ENCODE measurements at regions of chr18 and their contacts with region 1.

Region 1: DNA sequence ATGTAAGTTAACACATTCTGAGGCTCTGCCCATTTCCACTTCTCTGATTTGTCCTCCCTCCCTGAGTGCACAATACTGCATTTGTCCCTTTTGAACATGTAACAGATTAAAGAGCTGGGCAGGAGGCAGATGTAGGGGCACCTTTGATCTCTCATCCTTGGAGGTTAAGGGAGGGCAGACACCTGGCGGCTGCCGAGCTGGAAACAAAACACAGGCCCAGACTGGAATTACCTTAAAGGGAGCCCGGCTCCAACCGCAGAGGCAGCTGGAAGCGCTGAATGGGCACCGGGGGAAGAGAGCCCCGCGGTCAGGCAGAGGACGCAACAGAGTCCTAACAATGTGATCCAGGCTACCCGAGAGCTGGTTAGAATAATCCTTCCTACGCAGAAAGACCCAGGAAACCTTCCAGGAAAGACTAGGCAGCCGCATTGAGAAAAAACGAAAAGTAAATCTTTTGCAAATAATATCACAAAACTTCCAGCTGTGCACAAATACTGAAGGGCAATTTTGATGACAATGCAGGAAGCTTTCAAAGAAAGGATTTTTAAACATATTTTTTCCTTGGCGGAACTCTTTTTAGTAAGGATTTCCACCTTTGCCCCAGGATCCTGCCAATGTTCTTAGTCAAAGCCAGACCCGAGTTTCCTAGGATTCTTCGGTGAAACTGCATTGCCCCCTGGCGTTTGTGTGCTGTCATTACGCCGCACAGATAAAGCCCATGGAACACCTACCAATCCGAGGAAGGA is 216.0 kb downstream of the TGIF1 start:
- DNase-seq: peak; percentile 60 to 95 (median 86)

Region 2: DNA sequence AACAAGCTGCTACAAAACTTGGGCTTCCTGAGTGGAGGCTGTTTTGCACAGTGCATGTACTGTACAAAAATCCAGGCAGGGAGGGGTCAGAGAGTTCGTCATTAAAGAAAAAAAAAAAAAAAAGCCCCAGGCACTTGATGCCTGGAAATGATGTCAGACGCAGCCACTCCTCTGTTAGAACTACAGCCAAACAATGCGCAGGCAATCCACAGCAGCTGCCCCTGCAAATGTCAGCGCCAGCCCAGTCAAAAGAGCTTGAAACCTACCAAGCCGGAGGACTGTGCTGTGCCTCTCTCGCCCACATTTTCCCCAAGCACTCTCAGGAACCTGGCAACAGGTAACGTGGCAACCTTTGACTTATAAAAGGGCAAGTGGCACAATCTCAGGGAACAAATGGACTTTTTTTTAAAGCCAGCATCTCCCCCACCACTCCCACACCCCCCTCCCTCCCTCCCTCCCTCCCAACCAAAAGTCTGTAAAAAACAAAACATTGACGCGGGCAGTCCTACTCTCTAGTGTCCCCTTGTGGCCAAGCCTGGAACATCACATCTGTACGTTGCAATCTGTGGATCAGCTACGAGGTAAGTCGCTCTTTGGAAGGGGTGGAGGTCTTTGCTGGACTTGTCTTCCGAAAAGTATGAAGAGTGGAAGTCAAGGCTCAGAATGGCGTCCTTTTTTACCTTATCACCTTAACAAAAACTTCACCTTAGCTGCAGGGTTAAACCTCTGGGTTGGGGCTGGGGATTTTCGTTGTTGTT is 71.9 kb before region 1 on chr18:
- intact Hi-C with region 1: loop called (anchors 5 kb)
- DNase-seq: peak; percentile 60 to 97 (median 89)

Region 3: GRCh38 chr18:3771121-3771971 is 105.4 kb after region 1 on chr18:
- intact Hi-C with region 1: no loop called
- DNase-seq: peak; percentile 74 to 95 (median 88)